ENCODE measurements at regions of chr3 and their contacts with region 1.

Region 1: GRCh38 chr3:107429320-107430181 is 52.3 kb downstream of the CCDC54 start:
- DNase-seq: peak; percentile 79 to 83
- ATAC-seq: peak; percentile 79 to 87 (median 80)
- H3K4me3 ChIP-seq: peak overlapping the region; percentile 92
- H3K27ac ChIP-seq: peak overlapping the region; percentile 51
- H3K4me1 ChIP-seq: peaks cover 3% of the 10 kb centered on the region
- H3K27me3 ChIP-seq: no peaks in the 10 kb centered on the region
- CTCF ChIP-seq: peak; percentile 83

Region 2: DNA sequence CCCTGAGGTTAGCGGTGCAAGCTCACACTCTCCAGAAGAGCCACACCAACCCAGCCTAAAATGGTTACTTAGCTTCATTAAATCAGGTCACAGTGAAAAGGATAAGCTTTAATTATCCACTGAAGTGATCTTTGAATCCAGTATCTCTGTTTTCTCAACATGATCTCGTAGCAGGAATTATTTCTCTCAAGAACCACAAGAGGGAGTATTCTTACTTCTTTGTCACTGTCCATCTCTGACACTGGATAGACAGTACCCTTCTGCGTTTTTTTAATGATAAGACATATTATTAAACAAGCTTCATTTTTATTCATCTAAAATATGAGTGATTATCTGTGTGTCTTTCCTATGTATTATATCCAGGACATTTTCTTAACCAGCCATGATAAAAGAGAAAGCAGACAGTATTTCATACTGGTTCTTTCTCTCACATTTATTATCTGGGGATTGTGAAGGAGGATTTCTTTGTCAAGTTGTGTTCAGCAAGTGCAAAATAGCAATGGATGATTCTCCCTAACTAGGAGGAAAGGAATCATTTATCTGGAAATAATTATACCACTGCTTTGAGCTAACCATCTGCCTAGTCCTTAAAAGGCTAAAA is 157.7 kb before region 1 on chr3:
- intact Hi-C with region 1: loop called (anchors 5 to 10 kb)
- DNase-seq: no peak
- ATAC-seq: peak in 3 of 4 donors; percentile 45 to 72 (median 56)
- H3K4me3 ChIP-seq: no peak overlapping the region
- H3K27ac ChIP-seq: no peak overlapping the region
- H3K4me1 ChIP-seq: no peaks in the 10 kb centered on the region
- H3K27me3 ChIP-seq: no peaks in the 10 kb centered on the region
- CTCF ChIP-seq: peak; percentile 69

Region 3: GRCh38 chr3:107522510-107523288 is 93.1 kb after region 1 on chr3 and contains the start of gene BBX:
- intact Hi-C with region 1: loop called (anchors 2 to 5 kb)
- DNase-seq: peak; percentile 93
- ATAC-seq: peak; percentile 93 to 97 (median 97)
- H3K4me3 ChIP-seq: peak within 1 kb of the TSS; percentile 95
- H3K27ac ChIP-seq: peak within 1 kb of the TSS; percentile 80
- H3K4me1 ChIP-seq: peaks cover 14% of the 10 kb centered on the region
- H3K27me3 ChIP-seq: no peaks in the 10 kb centered on the region
- CTCF ChIP-seq: no peak
- total RNA-seq, gene BBX: 16.2 to 30.4 (median 24.6) TPM

Region 4: DNA sequence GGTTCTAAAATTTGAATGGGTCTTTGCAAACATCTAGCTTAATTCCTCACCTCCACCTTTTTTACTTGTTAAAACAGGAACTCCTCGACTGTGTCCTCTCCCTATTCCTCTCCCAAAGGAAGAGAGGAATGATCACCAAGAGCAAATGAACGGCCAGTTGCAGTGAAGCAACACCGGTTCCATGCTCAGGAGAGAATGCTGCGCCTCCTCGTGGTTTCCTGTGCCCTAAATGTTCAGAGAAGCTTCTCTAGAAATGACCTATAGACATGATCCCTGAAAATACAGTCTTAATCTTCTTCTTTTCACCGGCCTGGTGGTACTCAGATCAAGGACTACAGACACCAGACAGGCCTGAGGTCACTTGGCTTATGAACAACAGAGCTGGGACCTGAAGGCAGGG is 1589.3 kb after region 1 on chr3:
- intact Hi-C with region 1: no loop called
- DNase-seq: no peak
- ATAC-seq: no peak
- H3K4me3 ChIP-seq: no peak overlapping the region
- H3K27ac ChIP-seq: no peak overlapping the region
- H3K4me1 ChIP-seq: no peaks in the 10 kb centered on the region
- H3K27me3 ChIP-seq: no peaks in the 10 kb centered on the region
- CTCF ChIP-seq: no peak

Measured in psoas muscle (tissue), 8 donors.